ENCODE measurements at regions of chr17 and their contacts with region 1.

Region 1: GRCh38 chr17:39235555-39236449 is 10.1 kb upstream of the STAC2 start:
- DNase-seq: peak; percentile 25
- H3K4me3 Mint-ChIP-seq: no peak overlapping the region
- H3K27ac Mint-ChIP-seq: no peak overlapping the region
- H3K4me1 Mint-ChIP-seq: peaks cover 21% of the 10 kb centered on the region
- H3K27me3 Mint-ChIP-seq: peaks cover 5% of the 10 kb centered on the region

Region 2: DNA sequence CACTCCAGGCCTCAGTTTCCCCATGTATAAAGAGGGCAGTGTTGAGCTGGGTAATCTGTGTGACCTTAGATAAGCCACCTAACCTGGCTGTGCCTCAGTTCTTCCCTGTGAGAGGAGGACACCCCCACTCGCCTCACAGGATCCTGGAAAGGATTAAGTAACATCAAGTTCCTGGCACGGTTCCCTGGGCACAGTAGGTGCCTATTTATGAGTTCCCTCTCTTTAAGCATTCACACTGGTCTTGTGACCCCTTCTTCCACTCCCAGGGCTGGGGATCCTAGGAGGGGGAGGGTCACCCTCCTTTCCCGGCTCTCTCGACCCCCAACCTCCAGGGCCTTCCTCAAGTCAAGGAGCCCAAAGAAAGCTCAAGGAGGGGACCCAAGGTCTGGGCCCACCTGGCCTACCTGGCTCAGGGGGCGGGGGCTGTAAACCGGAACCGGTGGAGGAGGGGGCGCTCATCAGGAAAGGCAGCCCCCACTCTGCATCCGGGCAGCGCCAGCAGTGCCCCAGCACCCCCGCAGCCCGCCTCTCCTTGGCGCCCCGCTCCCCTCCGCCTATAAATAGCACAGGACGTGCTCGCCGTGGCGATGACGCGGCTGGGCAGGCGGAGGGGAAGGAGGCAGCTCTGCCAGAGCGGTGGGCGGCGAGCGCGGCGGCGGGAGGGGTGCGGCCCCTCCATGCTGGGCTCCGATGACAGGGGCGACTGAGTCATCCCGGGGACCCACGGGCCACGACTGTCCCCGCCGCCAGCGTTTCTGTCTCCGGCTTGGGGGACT is 26.3 kb before region 1 on chr17:
- intact Hi-C with region 1: loop called (anchors 1 kb)
- DNase-seq: peak; percentile 47
- H3K4me3 Mint-ChIP-seq: peak overlapping the region; percentile 15
- H3K27ac Mint-ChIP-seq: no peak overlapping the region
- H3K4me1 Mint-ChIP-seq: peaks cover 16% of the 10 kb centered on the region
- H3K27me3 Mint-ChIP-seq: peaks cover 12% of the 10 kb centered on the region

Region 3: GRCh38 chr17:39281806-39282205 is 46.0 kb after region 1 on chr17:
- intact Hi-C with region 1: no loop called
- DNase-seq: no peak
- H3K4me3 Mint-ChIP-seq: no peak overlapping the region
- H3K27ac Mint-ChIP-seq: no peak overlapping the region
- H3K4me1 Mint-ChIP-seq: no peaks in the 10 kb centered on the region
- H3K27me3 Mint-ChIP-seq: no peaks in the 10 kb centered on the region

Region 4: DNA sequence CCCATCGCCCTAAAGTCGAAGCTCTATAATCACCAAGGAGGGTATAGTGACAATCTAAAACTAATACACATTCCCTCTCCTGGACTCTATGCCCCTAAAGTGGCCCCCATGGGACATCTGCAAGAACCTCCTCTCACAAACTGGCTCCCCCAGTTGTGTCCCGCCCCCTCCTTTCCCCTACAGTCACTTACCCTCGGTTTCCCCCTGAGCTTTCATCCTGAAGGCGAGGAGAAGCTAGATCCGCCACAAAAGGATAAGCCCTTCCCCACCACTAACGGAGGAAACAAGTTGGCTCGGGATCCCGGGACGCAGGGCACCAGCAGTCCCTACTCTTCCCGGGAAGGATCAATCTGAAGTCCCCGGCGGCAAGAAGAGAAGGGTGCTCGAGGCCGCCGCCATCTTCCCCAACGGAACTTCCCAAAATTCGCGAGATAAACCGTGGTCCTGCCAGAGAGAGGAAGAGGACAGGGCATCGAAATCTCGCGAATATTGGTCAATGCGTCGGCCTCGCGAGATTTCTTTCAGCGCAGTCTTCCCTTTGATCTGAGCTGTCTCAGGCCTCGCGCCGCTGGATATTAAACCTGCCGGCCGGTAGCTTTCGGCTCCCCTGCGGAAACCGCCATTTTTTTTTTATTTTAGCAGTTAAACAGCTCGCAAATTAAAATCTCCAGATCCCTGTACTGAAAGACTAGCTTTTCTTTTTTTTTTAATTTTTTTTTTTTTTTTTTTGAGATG is 215.2 kb after region 1 on chr17 and contains the start of gene MED1:
- intact Hi-C with region 1: no loop called
- DNase-seq: peak; percentile 92
- H3K4me3 Mint-ChIP-seq: peak within 1 kb of the TSS; percentile 99
- H3K27ac Mint-ChIP-seq: peak within 1 kb of the TSS; percentile 93
- H3K4me1 Mint-ChIP-seq: peaks cover 25% of the 10 kb centered on the region
- H3K27me3 Mint-ChIP-seq: no peaks in the 10 kb centered on the region
- total RNA-seq, gene MED1: 72.0 and 73.4 TPM in 2 replicates

Measured in activated T-helper 1 cell treated with anti-CD3 and anti-CD28 coated beads, Interleukin-12 subunit alpha, Interleukin-12 subunit beta, Interleukin-2, Interleukin-4 antibody, amounts not matched to agents 30 ng/mL and 10 ng/mL and 1 ng/mL, durations not matched to agents 14 hours and 24 hours and 36 hours (primary cell).